ENCODE measurements at regions of chr7 and their contacts with region 1.

Region 1: GRCh38 chr7:2326951-2327350 is 12.7 kb upstream of the SNX8 start:
- H3K4me3 Mint-ChIP-seq: peak overlapping the region; percentile 17
- H3K27ac Mint-ChIP-seq: peak overlapping the region; percentile 98
- H3K4me1 Mint-ChIP-seq: peaks cover 51% of the 10 kb centered on the region
- H3K27me3 Mint-ChIP-seq: no peaks in the 10 kb centered on the region

Region 2: GRCh38 chr7:2157468-2158279 is 169.3 kb before region 1 on chr7:
- intact Hi-C with region 1: no loop called
- H3K4me3 Mint-ChIP-seq: no peak overlapping the region
- H3K27ac Mint-ChIP-seq: no peak overlapping the region
- H3K4me1 Mint-ChIP-seq: peaks cover 10% of the 10 kb centered on the region
- H3K27me3 Mint-ChIP-seq: no peaks in the 10 kb centered on the region

Region 3: DNA sequence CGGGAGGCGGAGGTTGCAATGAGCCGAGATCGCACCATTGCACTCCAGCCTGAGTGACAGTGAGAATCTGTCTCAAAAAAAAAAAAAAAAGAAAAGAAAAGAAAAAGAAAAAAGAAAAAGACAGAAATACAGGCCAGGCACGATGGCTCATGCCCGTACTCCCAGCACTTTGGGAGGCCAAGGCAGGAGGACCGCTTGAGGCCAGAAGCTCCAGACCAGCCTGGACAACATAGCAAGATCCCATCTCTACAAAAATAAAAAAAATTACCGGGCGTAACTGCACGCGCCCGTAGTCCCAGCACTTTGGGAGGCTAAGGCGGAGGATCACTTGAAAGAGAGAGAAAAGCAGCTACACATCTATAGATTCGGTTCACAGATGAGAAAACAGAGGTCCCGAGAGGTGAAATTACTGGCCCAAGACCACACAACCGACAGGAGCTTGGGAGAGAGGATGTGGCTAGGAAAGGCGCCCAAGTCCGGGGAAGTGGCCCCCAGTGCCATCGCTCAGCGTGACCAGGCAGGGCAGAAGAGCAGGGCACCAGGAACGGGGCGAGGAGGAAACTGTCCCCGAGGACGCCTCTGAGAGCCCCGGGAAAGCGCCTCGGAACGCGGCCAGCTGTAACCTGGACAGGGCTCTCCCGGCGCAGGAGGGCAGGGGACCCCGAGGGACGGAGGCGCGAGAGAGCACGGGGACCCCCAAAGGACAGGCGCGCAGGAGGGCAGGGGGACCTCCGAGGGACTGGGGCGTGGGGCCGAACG is 13.3 kb before region 1 on chr7:
- intact Hi-C with region 1: loop called (anchors 2 kb)
- H3K4me3 Mint-ChIP-seq: no peak overlapping the region
- H3K27ac Mint-ChIP-seq: no peak overlapping the region
- H3K4me1 Mint-ChIP-seq: peaks cover 38% of the 10 kb centered on the region
- H3K27me3 Mint-ChIP-seq: no peaks in the 10 kb centered on the region

Region 4: GRCh38 chr7:2354186-2354938 is 27.4 kb after region 1 on chr7 and contains the start of gene EIF3B:
- intact Hi-C with region 1: no loop called
- H3K4me3 Mint-ChIP-seq: peak within 1 kb of the TSS; percentile 87
- H3K27ac Mint-ChIP-seq: peak within 1 kb of the TSS; percentile 100
- H3K4me1 Mint-ChIP-seq: peaks cover 28% of the 10 kb centered on the region
- H3K27me3 Mint-ChIP-seq: no peaks in the 10 kb centered on the region